ENCODE measurements at regions of chr5 and their contacts with region 1.

Region 1: GRCh38 chr5:139633295-139634027 is 14.7 kb upstream of the CXXC5 start:
- DNase-seq: peak; percentile 76 to 84 (median 80)
- ATAC-seq: peak; percentile 54
- H3K4me3 ChIP-seq: no peak overlapping the region
- H3K27ac ChIP-seq: no peak overlapping the region; the same call in 2 of the 3 replicates
- H3K4me1 ChIP-seq: peaks cover 24 to 27% of the 10 kb centered on the region in 2 experiments
- H3K27me3 ChIP-seq: no peaks in the 10 kb centered on the region
- CTCF ChIP-seq: peak; percentile 96 to 98 (median 97)
- EP300 ChIP-seq: no peak
- POLR2A ChIP-seq: no peak
- RAD21 ChIP-seq: peak; percentile 92 to 95

Region 2: GRCh38 chr5:139422307-139422893 is 211.1 kb before region 1 on chr5:
- CTCF ChIA-PET with region 1: interaction called, 5 read pairs
- POLR2A ChIA-PET with region 1: no interaction called
- in situ Hi-C with region 1: no loop called
- intact Hi-C with region 1: loop called (anchors 2 kb)
- DNase-seq: peak; percentile 78 to 82 (median 80)
- ATAC-seq: peak; percentile 91
- H3K4me3 ChIP-seq: no peak overlapping the region
- H3K27ac ChIP-seq: no peak overlapping the region
- H3K4me1 ChIP-seq: peaks cover 3 to 5% of the 10 kb centered on the region in 2 experiments; a peak in 3 of 5 replicates
- H3K27me3 ChIP-seq: no peaks in the 10 kb centered on the region
- CTCF ChIP-seq: peak; percentile 84 to 96 (median 91)
- EP300 ChIP-seq: no peak
- POLR2A ChIP-seq: no peak
- RAD21 ChIP-seq: peak; percentile 97 to 99

Region 3: DNA sequence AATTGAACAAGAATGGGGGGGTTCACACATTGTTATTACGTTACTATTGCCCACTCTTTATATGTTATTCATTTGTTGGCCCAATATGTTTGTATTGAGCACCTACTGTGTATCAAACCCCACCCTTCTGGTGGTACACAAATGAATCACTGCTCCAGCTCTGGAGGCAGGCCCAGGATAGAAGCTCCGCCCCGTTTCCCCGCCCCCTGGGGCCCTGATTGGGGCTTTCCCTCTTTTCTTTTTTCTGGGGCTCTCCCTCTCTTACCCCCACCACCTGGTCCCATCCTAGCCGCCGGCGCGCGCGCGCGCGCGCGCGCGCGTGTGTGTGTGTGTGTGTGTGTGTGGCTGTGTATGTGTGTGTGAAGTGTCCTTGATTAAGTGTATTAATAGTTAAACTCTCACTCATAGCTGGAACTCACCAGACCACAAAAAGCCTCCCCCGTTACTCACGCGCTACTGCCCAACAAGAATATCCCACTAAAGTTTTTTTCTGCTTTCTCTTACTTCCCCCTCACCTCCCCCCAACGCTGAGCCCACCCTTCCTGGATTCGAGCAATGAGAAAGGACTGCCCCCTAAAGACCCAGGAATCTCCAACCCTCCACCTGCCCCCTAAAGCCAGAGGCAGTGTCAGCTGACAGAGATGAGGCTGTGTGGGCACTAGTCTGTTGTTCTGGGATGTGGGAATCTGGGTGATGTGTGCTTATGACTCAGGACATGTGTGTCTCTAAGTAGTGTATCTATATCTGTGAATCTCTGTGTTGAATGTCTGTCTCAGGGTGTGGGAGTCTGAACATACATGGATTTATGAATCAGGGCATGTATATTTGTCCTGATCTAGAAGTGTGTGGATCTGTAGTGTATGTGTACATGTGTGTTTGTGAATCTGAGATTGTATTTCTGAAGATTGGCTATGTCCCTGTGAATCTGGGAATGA is 18.7 kb after region 1 on chr5:
- CTCF ChIA-PET with region 1: interaction called, 5 read pairs
- POLR2A ChIA-PET with region 1: interaction called, 63 read pairs
- in situ Hi-C with region 1: no loop called
- intact Hi-C with region 1: loop called (anchors 1 kb)
- DNase-seq: peak; percentile 85 to 89 (median 86)
- ATAC-seq: peak; percentile 40
- H3K4me3 ChIP-seq: peak overlapping the region; percentile 90; the same call in 1 of the 2 replicates
- H3K27ac ChIP-seq: no peak overlapping the region
- H3K4me1 ChIP-seq: peaks cover 58 to 81% of the 10 kb centered on the region in 2 experiments
- H3K27me3 ChIP-seq: no peaks in the 10 kb centered on the region
- CTCF ChIP-seq: no peak
- EP300 ChIP-seq: no peak
- POLR2A ChIP-seq: no peak
- RAD21 ChIP-seq: no peak

Region 4: GRCh38 chr5:139690064-139690802 is 56.8 kb after region 1 on chr5:
- CTCF ChIA-PET with region 1: interaction called, 9 read pairs
- POLR2A ChIA-PET with region 1: interaction called, 4 read pairs
- in situ Hi-C with region 1: no loop called
- intact Hi-C with region 1: loop called (anchors 1 kb)
- DNase-seq: peak; percentile 60 to 85 (median 70)
- ATAC-seq: peak; percentile 70
- H3K4me3 ChIP-seq: no peak overlapping the region
- H3K27ac ChIP-seq: peak overlapping the region; percentile 29
- H3K4me1 ChIP-seq: peaks cover 38 to 60% of the 10 kb centered on the region in 2 experiments
- H3K27me3 ChIP-seq: no peaks in the 10 kb centered on the region; a peak in 1 of 5 replicates
- CTCF ChIP-seq: peak; percentile 53 to 63 (median 56); a peak in 5 of 6 replicates
- EP300 ChIP-seq: no peak
- POLR2A ChIP-seq: no peak
- RAD21 ChIP-seq: peak; percentile 55 to 73; a peak in 3 of 4 replicates

Region 5: GRCh38 chr5:139711067-139711905 is 77.8 kb after region 1 on chr5:
- CTCF ChIA-PET with region 1: interaction called, 5 read pairs
- POLR2A ChIA-PET with region 1: interaction called, 21 read pairs
- in situ Hi-C with region 1: no loop called
- intact Hi-C with region 1: loop called (anchors 1 kb)
- DNase-seq: peak; percentile 72 to 87 (median 80)
- ATAC-seq: peak; percentile 65
- H3K4me3 ChIP-seq: peak overlapping the region; percentile 57
- H3K27ac ChIP-seq: peak overlapping the region; percentile 81; the same call in 2 of the 3 replicates
- H3K4me1 ChIP-seq: peaks cover 40 to 50% of the 10 kb centered on the region in 2 experiments
- H3K27me3 ChIP-seq: no peaks in the 10 kb centered on the region
- CTCF ChIP-seq: peak; percentile 37 to 63 (median 54); a peak in 5 of 6 replicates
- EP300 ChIP-seq: no peak
- POLR2A ChIP-seq: no peak
- RAD21 ChIP-seq: peak in 1 of 2 experiments; percentile 58; a peak in 2 of 4 replicates

Region 6: GRCh38 chr5:139844472-139845145 is 211.1 kb after region 1 on chr5:
- CTCF ChIA-PET with region 1: interaction called, 3 read pairs
- POLR2A ChIA-PET with region 1: no interaction called
- in situ Hi-C with region 1: no loop called
- intact Hi-C with region 1: loop called (anchors 5 kb)
- DNase-seq: peak; percentile 78 to 86 (median 78)
- ATAC-seq: peak; percentile 94
- H3K4me3 ChIP-seq: no peak overlapping the region
- H3K27ac ChIP-seq: no peak overlapping the region
- H3K4me1 ChIP-seq: peaks cover 0 to 9% of the 10 kb centered on the region in 2 experiments; a peak in 2 of 5 replicates
- H3K27me3 ChIP-seq: peaks cover 32 to 60% of the 10 kb centered on the region in 2 experiments
- CTCF ChIP-seq: peak; percentile 89 to 95 (median 91)
- EP300 ChIP-seq: no peak
- POLR2A ChIP-seq: no peak
- RAD21 ChIP-seq: peak; percentile 65 to 75

Region 7: DNA sequence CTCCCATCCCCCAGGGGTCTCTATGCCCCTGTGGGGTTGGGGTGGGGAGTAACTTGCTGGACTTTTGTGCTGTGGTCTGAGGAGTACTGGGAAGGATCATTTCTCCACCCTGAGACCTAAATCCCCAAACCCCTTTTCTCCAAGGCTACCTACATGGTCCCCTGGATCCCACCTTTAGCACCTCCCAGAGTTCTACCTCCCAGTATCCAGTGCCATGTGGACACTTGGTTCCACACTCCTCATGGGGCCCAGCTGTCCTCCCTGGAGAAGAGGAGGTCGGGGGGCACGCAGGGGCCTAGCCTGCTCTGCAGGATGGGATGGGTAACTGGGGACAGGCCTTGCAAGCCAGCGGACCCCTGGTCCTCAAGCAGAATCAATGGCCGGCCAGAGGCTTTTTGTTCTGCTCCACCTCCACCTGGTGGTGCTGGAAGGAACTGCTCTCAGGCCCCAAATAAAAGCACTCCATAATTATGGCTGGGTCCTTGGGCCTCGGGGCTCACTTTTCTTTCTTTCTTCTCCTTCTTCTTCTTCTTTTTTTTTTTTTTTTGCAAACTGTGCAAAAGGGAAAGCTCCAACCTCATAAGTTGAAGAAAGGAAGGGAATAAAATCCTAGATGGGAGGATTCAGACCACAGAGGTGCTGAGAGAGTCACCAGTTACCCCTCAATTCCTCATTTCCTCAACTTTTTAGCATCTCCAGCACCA is 230.5 kb after region 1 on chr5:
- CTCF ChIA-PET with region 1: interaction called, 5 read pairs
- POLR2A ChIA-PET with region 1: interaction called, 4 read pairs
- in situ Hi-C with region 1: loop called (anchors 10 kb)
- intact Hi-C with region 1: loop called (anchors 5 kb)
- DNase-seq: peak; percentile 69 to 77 (median 74)
- ATAC-seq: peak; percentile 91
- H3K4me3 ChIP-seq: no peak overlapping the region
- H3K27ac ChIP-seq: no peak overlapping the region
- H3K4me1 ChIP-seq: no peaks in the 10 kb centered on the region
- H3K27me3 ChIP-seq: peaks cover 0 to 29% of the 10 kb centered on the region in 2 experiments; a peak in 3 of 5 replicates
- CTCF ChIP-seq: peak; percentile 85 to 88 (median 86)
- EP300 ChIP-seq: no peak
- POLR2A ChIP-seq: no peak
- RAD21 ChIP-seq: peak; percentile 50 to 79